Panc1 (cell line): ENCODE measurements at regions of chr15 and their contacts with region 1.

Region 1: DNA sequence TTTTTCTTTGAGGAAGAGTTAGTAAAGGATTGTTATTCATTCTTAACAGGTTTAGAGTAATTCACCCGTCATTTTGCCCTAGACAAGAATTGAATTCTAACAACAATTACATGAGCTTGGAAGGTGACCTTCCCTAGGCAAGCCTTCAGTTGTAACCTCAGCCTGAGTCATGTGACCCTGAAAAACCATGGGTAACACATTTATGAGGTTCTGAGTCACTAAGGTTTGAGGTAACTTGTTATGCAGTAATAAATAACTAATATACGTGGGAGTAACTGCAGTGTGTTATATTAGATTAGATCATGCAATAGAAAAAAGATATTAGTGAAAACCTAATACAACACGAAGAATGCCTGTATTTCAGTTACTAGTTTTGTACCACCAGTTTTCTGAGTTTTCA is 237.6 kb upstream of the NDN start:
- DNase-seq: no peak
- ATAC-seq: no peak
- H3K4me3 ChIP-seq: no peak overlapping the region
- H3K27ac ChIP-seq: no peak overlapping the region
- H3K4me1 ChIP-seq: no peaks in the 10 kb centered on the region
- H3K27me3 ChIP-seq: no peaks in the 10 kb centered on the region
- CTCF ChIP-seq: no peak

Region 2: GRCh38 chr15:23877502-23878412 is 46.9 kb before region 1 on chr15:
- CTCF ChIA-PET with region 1: no interaction called
- POLR2A ChIA-PET with region 1: no interaction called
- in situ Hi-C with region 1: no loop called
- intact Hi-C with region 1: loop called (anchors 10 kb)
- DNase-seq: no peak
- ATAC-seq: peak; percentile 93
- H3K4me3 ChIP-seq: no peak overlapping the region
- H3K27ac ChIP-seq: no peak overlapping the region
- H3K4me1 ChIP-seq: no peaks in the 10 kb centered on the region
- H3K27me3 ChIP-seq: no peaks in the 10 kb centered on the region
- CTCF ChIP-seq: peak; percentile 83

Region 3: GRCh38 chr15:23954931-23955330 is 30.2 kb after region 1 on chr15:
- CTCF ChIA-PET with region 1: no interaction called
- POLR2A ChIA-PET with region 1: no interaction called
- in situ Hi-C with region 1: no loop called
- intact Hi-C with region 1: no loop called
- DNase-seq: no peak
- ATAC-seq: no peak
- H3K4me3 ChIP-seq: no peak overlapping the region
- H3K27ac ChIP-seq: no peak overlapping the region
- H3K4me1 ChIP-seq: no peaks in the 10 kb centered on the region
- H3K27me3 ChIP-seq: no peaks in the 10 kb centered on the region
- CTCF ChIP-seq: no peak

Region 4: DNA sequence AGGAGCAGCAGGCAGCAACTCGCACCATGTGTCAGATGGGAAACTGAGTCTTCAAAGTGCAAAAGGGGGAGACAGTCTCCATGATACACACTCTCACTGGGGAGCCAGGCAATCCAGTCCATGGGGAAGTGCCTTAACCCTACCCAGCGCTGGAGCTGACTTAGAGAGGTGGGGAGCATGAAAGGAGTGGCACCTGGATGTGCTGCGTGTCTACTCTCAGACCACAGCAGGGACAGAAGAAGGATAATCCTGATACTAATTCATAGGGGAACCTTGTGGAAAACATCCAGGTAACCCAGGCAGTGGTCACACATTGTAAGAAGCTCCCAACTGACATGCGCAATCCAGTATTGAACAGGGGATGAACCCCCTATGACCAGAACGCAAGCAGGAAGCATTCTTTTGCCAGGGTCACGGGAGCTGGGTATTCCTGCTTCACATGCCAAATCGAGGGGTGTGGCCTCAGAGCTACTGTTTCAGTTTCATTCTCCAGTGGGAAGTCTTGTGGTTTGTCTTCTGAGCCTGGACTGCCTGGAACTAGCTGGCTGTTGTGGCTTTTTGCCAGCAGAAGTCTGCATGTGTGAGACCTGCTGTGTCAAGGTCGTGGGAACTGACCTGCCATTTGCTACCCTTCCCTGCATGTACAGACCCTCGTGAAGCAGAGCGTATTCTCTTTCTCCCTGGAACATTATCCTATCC is 130.0 kb after region 1 on chr15:
- CTCF ChIA-PET with region 1: no interaction called
- POLR2A ChIA-PET with region 1: no interaction called
- in situ Hi-C with region 1: no loop called
- intact Hi-C with region 1: no loop called
- DNase-seq: no peak
- ATAC-seq: no peak
- H3K4me3 ChIP-seq: no peak overlapping the region
- H3K27ac ChIP-seq: no peak overlapping the region
- H3K4me1 ChIP-seq: no peaks in the 10 kb centered on the region
- H3K27me3 ChIP-seq: no peaks in the 10 kb centered on the region
- CTCF ChIP-seq: no peak